GM12878 (cell line): ENCODE measurements at regions of chr7 and their contacts with region 1.

Region 1: DNA sequence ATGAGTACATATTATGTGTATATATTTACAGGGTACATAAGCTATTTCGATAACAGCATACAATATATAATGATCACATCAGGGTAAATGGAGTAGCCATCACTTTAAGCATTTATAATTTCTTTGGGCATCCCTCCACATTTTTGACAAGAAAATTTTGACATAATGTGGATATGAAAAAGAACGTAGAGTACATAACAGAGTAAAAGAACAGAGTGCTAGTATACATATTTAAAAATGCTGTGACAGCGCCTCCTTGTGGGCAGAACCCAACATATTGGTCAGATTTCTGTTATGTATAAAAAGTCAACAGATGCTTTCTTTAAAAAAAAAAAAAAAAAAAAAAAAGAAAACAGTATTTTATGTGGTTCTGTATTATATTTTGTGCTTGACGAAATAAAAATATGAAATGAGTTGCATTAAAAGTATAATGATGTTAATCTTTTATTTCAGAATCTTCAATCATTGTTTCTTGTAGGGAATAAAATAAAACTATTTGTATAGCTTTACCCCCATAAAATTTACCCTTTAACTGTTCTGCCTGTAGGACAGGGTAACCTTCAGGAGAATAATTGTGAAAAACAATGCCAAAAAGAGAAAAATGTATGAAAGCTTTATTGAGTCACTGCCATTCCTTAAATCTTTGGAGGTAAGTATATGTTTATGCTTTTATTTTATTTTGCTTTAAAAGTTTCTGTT is 18.3 kb upstream of the HBP1 start:
- DNase-seq: no peak
- ATAC-seq: peak; percentile 85
- H3K4me3 ChIP-seq: no peak overlapping the region
- H3K27ac ChIP-seq: no peak overlapping the region
- H3K4me1 ChIP-seq: no peaks in the 10 kb centered on the region
- H3K27me3 ChIP-seq: no peaks in the 10 kb centered on the region; a peak in 2 of 4 replicates
- CTCF ChIP-seq: peak; percentile 45 to 59 (median 47); a peak in 5 of 6 replicates
- EP300 ChIP-seq: no peak
- POLR2A ChIP-seq: no peak
- RAD21 ChIP-seq: peak; percentile 69

Region 2: GRCh38 chr7:106392590-106392989 is 757.9 kb before region 1 on chr7:
- CTCF ChIA-PET with region 1: no interaction called
- POLR2A ChIA-PET with region 1: no interaction called
- RAD21 ChIA-PET with region 1: no interaction called
- SMC1A ChIA-PET with region 1: no interaction called
- in situ Hi-C with region 1: no loop called
- intact Hi-C with region 1: no loop called
- DNase-seq: no peak
- ATAC-seq: no peak
- H3K4me3 ChIP-seq: no peak overlapping the region
- H3K27ac ChIP-seq: no peak overlapping the region
- H3K4me1 ChIP-seq: no peaks in the 10 kb centered on the region
- H3K27me3 ChIP-seq: no peaks in the 10 kb centered on the region
- CTCF ChIP-seq: no peak
- EP300 ChIP-seq: no peak
- POLR2A ChIP-seq: no peak
- RAD21 ChIP-seq: no peak

Region 3: DNA sequence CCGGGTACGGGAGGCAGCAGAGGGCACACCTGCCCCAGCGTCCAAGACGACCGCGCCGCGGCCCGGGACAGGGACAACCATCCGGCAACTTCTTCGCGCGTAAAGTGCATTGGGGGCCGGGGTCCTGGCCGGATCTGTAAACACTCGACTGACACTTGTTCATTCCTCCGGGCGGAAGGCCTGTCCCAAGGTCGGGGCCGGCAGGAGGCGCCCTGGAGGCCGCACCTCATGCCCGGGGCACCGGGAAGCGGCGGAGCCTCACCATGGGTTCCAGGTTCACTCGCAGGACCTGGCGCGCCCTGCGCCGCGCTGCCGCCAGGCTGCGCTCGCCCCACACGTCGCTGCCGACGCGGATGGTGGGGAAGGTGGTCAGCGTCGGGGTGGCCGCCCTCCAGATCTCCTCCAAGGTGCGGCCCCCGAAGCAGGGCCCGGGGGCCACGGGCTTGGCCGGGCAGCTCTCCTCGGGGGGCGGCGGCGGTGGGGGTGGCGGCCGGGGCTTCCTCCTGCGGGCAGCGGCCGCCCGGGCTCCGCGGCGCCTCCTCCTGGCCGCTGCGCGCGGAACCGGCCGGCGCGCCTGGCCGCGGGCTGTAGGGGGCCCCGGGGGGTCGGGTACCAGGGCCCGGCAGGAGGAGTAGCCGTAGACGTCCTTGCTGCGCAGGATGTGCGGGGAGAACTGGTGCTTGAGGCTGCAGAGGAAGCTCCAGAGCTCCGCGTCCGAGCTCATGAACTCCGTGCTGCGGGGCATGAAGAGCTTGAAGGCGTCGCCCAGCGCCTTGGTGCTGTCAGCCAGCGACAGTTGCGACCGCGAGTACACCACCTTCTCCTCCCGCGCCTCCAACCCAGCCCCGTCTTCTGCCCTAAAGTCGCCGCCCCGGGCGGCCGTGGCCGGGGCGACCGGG is 490.3 kb before region 1 on chr7:
- CTCF ChIA-PET with region 1: no interaction called
- POLR2A ChIA-PET with region 1: no interaction called
- RAD21 ChIA-PET with region 1: no interaction called
- SMC1A ChIA-PET with region 1: no interaction called
- in situ Hi-C with region 1: no loop called
- intact Hi-C with region 1: loop called (anchors 10 kb)
- DNase-seq: peak; percentile 51
- ATAC-seq: peak; percentile 79
- H3K4me3 ChIP-seq: peak overlapping the region; percentile 96
- H3K27ac ChIP-seq: peak overlapping the region; percentile 72
- H3K4me1 ChIP-seq: peaks cover 9% of the 10 kb centered on the region; the same call in 1 of the 2 replicates
- H3K27me3 ChIP-seq: no peaks in the 10 kb centered on the region; a peak in 1 of 4 replicates
- CTCF ChIP-seq: peak; percentile 78 to 94 (median 89)
- EP300 ChIP-seq: 0 out of 4 replicates have a peak, but pooled peaks of 1 of the 2 experiments have one; percentile 37
- POLR2A ChIP-seq: peak; percentile 78
- RAD21 ChIP-seq: peak; percentile 76

Region 4: GRCh38 chr7:106952658-106953231 is 197.8 kb before region 1 on chr7:
- CTCF ChIA-PET with region 1: interaction called, 77 read pairs
- POLR2A ChIA-PET with region 1: no interaction called
- RAD21 ChIA-PET with region 1: interaction called, 45 read pairs
- SMC1A ChIA-PET with region 1: interaction called, 49 read pairs
- in situ Hi-C with region 1: loop called (anchors 5 kb)
- intact Hi-C with region 1: loop called (anchors 1 kb)
- DNase-seq: no peak
- ATAC-seq: no peak
- H3K4me3 ChIP-seq: no peak overlapping the region
- H3K27ac ChIP-seq: no peak overlapping the region
- H3K4me1 ChIP-seq: no peaks in the 10 kb centered on the region
- H3K27me3 ChIP-seq: peaks cover 3% of the 10 kb centered on the region in 2 experiments; a peak in 2 of 4 replicates
- CTCF ChIP-seq: no peak
- EP300 ChIP-seq: no peak
- POLR2A ChIP-seq: no peak
- RAD21 ChIP-seq: no peak

Region 5: DNA sequence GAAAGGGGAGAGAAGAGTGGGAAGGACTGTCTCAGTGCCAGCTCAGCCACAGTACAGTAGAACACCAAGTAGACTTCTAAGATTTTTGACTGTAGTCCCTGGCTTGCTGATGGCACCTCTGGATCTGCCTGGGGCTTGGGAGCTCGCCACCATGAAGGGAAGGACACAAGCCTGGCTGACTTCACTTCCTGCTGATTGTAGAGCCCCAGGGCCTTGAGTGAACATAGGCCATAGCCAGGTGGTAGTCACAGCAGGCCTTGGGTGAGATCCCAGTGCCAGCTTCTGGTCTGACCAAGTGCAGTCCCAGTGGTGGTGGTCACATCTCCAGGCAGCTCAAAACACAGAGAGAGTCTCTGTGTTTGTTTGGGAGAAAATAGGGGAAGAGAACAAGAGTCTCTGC is 39.3 kb before region 1 on chr7:
- CTCF ChIA-PET with region 1: no interaction called
- POLR2A ChIA-PET with region 1: no interaction called
- RAD21 ChIA-PET with region 1: no interaction called
- SMC1A ChIA-PET with region 1: no interaction called
- in situ Hi-C with region 1: no loop called
- intact Hi-C with region 1: no loop called
- DNase-seq: no peak
- ATAC-seq: no peak
- H3K4me3 ChIP-seq: no peak overlapping the region
- H3K27ac ChIP-seq: no peak overlapping the region
- H3K4me1 ChIP-seq: no peaks in the 10 kb centered on the region
- H3K27me3 ChIP-seq: no peaks in the 10 kb centered on the region
- CTCF ChIP-seq: no peak
- EP300 ChIP-seq: no peak
- POLR2A ChIP-seq: no peak
- RAD21 ChIP-seq: no peak

Region 6: GRCh38 chr7:107122486-107122911 is 28.0 kb before region 1 on chr7:
- CTCF ChIA-PET with region 1: interaction called, 13 read pairs
- POLR2A ChIA-PET with region 1: no interaction called
- RAD21 ChIA-PET with region 1: interaction called, 5 read pairs
- SMC1A ChIA-PET with region 1: interaction called, 11 read pairs
- in situ Hi-C with region 1: no loop called
- intact Hi-C with region 1: no loop called
- DNase-seq: no peak
- ATAC-seq: no peak
- H3K4me3 ChIP-seq: no peak overlapping the region
- H3K27ac ChIP-seq: no peak overlapping the region
- H3K4me1 ChIP-seq: peaks cover 10% of the 10 kb centered on the region
- H3K27me3 ChIP-seq: no peaks in the 10 kb centered on the region
- CTCF ChIP-seq: no peak
- EP300 ChIP-seq: no peak
- POLR2A ChIP-seq: no peak
- RAD21 ChIP-seq: no peak

Region 7: GRCh38 chr7:107173691-107174406 is 23.3 kb after region 1 on chr7:
- CTCF ChIA-PET with region 1: interaction called, 16 read pairs
- POLR2A ChIA-PET with region 1: no interaction called
- RAD21 ChIA-PET with region 1: interaction called, 11 read pairs
- SMC1A ChIA-PET with region 1: interaction called, 51 read pairs
- in situ Hi-C with region 1: no loop called
- intact Hi-C with region 1: no loop called
- DNase-seq: no peak
- ATAC-seq: peak; percentile 68
- H3K4me3 ChIP-seq: no peak overlapping the region
- H3K27ac ChIP-seq: peak overlapping the region; percentile 15; the same call in 1 of the 2 replicates
- H3K4me1 ChIP-seq: peaks cover 26% of the 10 kb centered on the region
- H3K27me3 ChIP-seq: no peaks in the 10 kb centered on the region
- CTCF ChIP-seq: no peak
- EP300 ChIP-seq: no peak
- POLR2A ChIP-seq: no peak
- RAD21 ChIP-seq: no peak

Region 8: GRCh38 chr7:107638594-107638993 is 488.1 kb after region 1 on chr7:
- CTCF ChIA-PET with region 1: no interaction called
- POLR2A ChIA-PET with region 1: no interaction called
- RAD21 ChIA-PET with region 1: no interaction called
- SMC1A ChIA-PET with region 1: no interaction called
- in situ Hi-C with region 1: no loop called
- intact Hi-C with region 1: no loop called
- DNase-seq: peak; percentile 75
- ATAC-seq: peak; percentile 93
- H3K4me3 ChIP-seq: peak overlapping the region; percentile 13; the same call in 1 of the 2 replicates
- H3K27ac ChIP-seq: 0 out of 2 replicates have a peak overlapping the region, but pooled peaks have one; percentile 25
- H3K4me1 ChIP-seq: peaks cover 15% of the 10 kb centered on the region
- H3K27me3 ChIP-seq: peaks cover 0 to 3% of the 10 kb centered on the region in 2 experiments; a peak in 1 of 4 replicates
- CTCF ChIP-seq: no peak
- EP300 ChIP-seq: peak; percentile 73 to 74; a peak in 3 of 4 replicates
- POLR2A ChIP-seq: no peak
- RAD21 ChIP-seq: no peak

Region 9: GRCh38 chr7:107879400-107880035 is 729.0 kb after region 1 on chr7:
- CTCF ChIA-PET with region 1: interaction called, 17 read pairs
- POLR2A ChIA-PET with region 1: no interaction called
- RAD21 ChIA-PET with region 1: interaction called, 8 read pairs
- SMC1A ChIA-PET with region 1: interaction called, 10 read pairs
- in situ Hi-C with region 1: no loop called
- intact Hi-C with region 1: loop called (anchors 5 kb)
- DNase-seq: no peak
- ATAC-seq: peak; percentile 87
- H3K4me3 ChIP-seq: no peak overlapping the region
- H3K27ac ChIP-seq: no peak overlapping the region
- H3K4me1 ChIP-seq: no peaks in the 10 kb centered on the region
- H3K27me3 ChIP-seq: no peaks in the 10 kb centered on the region; a peak in 1 of 4 replicates
- CTCF ChIP-seq: peak; percentile 70 to 78 (median 77)
- EP300 ChIP-seq: no peak
- POLR2A ChIP-seq: no peak
- RAD21 ChIP-seq: peak; percentile 68